A673 (cell line): ENCODE measurements at regions of chr4 and their contacts with region 1.

Region 1: GRCh38 chr4:173370477-173371291 is at the start of gene SAP30:
- DNase-seq: peak; percentile 99
- H3K4me3 ChIP-seq: peak within 1 kb of the TSS; percentile 91
- H3K27ac ChIP-seq: peak within 1 kb of the TSS; percentile 90
- H3K4me1 ChIP-seq: peaks cover 18% of the 10 kb centered on the region
- H3K27me3 ChIP-seq: no peaks in the 10 kb centered on the region
- CTCF ChIP-seq: no peak
- total RNA-seq, gene SAP30: 56.5 and 64.3 TPM in 2 replicates

Region 2: DNA sequence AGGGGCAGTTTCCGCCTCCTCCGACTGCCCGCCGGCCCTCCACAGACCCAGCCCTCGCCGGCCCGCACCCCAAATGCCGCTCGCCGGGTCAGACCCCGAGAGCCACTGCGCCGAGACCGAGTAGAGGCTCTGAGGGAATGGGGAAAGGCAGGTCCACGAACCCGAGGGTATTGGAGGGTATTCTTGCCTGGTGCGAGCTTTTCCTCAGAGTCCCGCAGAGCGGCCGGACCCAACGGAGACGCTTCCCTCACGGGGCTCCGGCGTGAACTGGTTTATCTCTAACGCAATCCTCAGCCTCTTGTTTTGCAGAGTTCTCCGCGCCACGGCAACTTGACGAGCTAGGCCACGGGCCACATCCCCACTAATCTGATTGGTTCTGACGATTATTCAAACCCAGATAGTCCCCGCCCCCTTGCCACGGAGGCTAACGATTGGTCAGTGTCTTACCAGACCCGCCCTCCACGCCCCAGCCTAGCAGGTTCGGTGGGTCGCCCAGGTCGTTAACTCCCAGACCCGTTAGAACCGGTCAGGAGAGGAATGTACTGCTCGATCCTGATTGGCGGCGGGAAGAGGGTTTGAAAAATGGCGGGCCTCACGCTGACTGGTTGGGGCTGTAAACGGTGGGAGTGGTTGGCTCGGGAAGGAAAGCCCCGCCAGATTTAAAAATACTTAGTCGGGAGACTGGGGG is 36.5 kb before region 1 on chr4 and contains the start of gene HMGB2:
- CTCF ChIA-PET with region 1: interaction called, 5 read pairs
- POLR2A ChIA-PET with region 1: interaction called, 11 read pairs
- intact Hi-C with region 1: loop called (anchors 2 kb)
- DNase-seq: peak; percentile 100
- H3K4me3 ChIP-seq: peak within 1 kb of the TSS; percentile 93
- H3K27ac ChIP-seq: peak within 1 kb of the TSS; percentile 99
- H3K4me1 ChIP-seq: peaks cover 32% of the 10 kb centered on the region
- H3K27me3 ChIP-seq: no peaks in the 10 kb centered on the region
- CTCF ChIP-seq: no peak
- total RNA-seq, gene HMGB2: 392 and 435 TPM in 2 replicates

Region 3: GRCh38 chr4:173405840-173406606 is 35.3 kb after region 1 on chr4:
- CTCF ChIA-PET with region 1: no interaction called
- POLR2A ChIA-PET with region 1: interaction called, 30 read pairs
- intact Hi-C with region 1: loop called (anchors 5 kb)
- DNase-seq: no peak
- H3K4me3 ChIP-seq: no peak overlapping the region
- H3K27ac ChIP-seq: no peak overlapping the region
- H3K4me1 ChIP-seq: no peaks in the 10 kb centered on the region
- H3K27me3 ChIP-seq: no peaks in the 10 kb centered on the region
- CTCF ChIP-seq: no peak

Region 4: DNA sequence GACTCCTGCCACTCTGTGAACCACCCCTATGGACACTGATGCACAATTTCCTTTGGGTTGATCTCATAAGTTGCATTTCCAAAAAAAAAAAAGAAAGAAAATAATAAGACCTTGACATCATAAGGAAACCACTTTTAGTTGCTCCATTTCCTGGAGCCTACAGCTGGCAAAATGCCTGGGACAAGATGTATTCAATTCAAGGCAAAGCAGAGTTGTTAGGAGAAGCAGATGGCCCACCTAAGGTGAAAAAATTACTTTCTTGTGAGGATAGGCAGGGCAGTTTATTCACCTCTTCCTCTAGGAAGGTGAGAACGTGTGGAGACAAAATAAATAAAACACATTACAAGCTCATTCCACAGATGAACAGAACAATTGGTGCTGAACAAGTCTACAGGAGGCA is 42.4 kb after region 1 on chr4:
- CTCF ChIA-PET with region 1: interaction called, 4 read pairs
- POLR2A ChIA-PET with region 1: no interaction called
- intact Hi-C with region 1: loop called (anchors 5 kb)
- DNase-seq: peak; percentile 82
- H3K4me3 ChIP-seq: no peak overlapping the region
- H3K27ac ChIP-seq: peak overlapping the region; percentile 63
- H3K4me1 ChIP-seq: peaks cover 47% of the 10 kb centered on the region
- H3K27me3 ChIP-seq: no peaks in the 10 kb centered on the region
- CTCF ChIP-seq: no peak